ENCODE measurements at regions of chr6 and their contacts with region 1.

Region 1: DNA sequence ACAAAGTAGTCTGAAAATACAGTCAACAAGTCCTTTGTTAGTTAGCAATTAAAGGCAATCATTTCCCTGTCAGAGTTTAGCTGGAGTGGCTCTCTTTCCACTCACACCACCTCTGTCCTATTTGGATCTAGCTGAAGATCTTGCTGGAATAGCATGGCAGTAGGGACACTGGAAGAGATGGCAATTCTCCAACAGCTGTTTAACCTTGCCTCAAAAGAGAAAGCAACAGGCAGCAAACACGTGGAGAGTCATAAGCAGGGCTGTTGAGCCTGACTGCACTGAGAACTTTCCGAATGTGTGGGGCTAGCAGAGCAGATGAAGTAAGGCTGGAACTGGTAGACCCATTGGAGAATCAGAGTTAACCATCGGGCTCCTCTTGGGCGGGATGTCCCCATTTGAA is 38.0 kb upstream of the PRSS35 start:
- DNase-seq: no peak
- ATAC-seq: peak; percentile 77 to 91 (median 84)
- H3K4me3 ChIP-seq: no peak overlapping the region
- H3K27ac ChIP-seq: no peak overlapping the region
- H3K4me1 ChIP-seq: no peaks in the 10 kb centered on the region
- H3K27me3 ChIP-seq: no peaks in the 10 kb centered on the region
- CTCF ChIP-seq: no peak

Region 2: GRCh38 chr6:83429857-83430610 is 44.3 kb before region 1 on chr6:
- intact Hi-C with region 1: loop called in 1 of 2 experiments (anchors 10 kb)
- DNase-seq: peak in 1 of 2 donors; percentile 30
- ATAC-seq: peak; percentile 55 to 69 (median 66)
- H3K4me3 ChIP-seq: peak overlapping the region; percentile 89
- H3K27ac ChIP-seq: peak overlapping the region; percentile 82
- H3K4me1 ChIP-seq: peaks cover 10% of the 10 kb centered on the region
- H3K27me3 ChIP-seq: no peaks in the 10 kb centered on the region
- CTCF ChIP-seq: no peak

Region 3: DNA sequence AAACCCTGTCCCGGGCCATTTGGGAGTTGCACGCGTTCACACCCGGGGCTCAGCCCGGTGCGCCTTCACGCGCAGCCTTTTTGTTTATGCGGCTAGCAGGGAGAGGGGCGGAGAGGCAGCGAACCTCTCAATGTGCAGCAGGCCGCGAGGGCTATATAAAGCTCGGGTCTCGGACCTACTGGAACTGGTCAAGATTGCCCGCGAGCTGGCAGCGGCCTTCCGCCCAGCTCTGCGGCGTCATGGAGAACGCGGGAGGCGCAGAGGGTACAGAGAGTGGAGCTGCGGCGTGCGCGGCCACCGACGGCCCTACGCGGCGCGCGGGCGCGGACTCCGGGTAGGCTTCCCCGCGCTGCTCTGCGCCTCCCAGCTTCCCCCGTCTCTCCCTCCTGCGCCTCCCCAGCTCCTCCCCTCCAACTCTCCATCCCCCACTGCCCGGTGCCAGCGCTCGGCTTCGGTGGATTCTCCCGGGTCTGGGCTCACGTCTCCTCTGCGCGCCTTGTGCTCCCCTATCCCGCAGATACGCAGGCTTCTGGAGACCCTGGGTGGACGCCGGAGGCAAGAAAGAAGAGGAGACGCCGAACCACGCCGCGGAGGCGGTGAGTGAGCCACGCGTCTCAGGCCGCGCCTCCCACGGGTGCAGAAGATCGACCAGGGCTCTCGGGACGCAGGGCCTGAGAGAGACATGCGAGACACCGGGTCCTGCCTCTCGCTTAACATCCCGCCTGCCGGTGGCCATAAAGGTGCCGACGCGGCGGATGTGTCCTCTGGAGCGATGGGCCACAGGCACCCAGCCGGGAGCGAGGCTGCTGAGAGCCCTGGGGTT is 379.1 kb after region 1 on chr6 and contains the start of gene RIPPLY2:
- intact Hi-C with region 1: no loop called
- DNase-seq: peak in 1 of 2 donors; percentile 48
- ATAC-seq: peak in 3 of 4 donors; percentile 65 to 68 (median 67)
- H3K4me3 ChIP-seq: peak within 1 kb of the TSS; percentile 60
- H3K27ac ChIP-seq: no peak within 1 kb of the TSS
- H3K4me1 ChIP-seq: peaks cover 7% of the 10 kb centered on the region
- H3K27me3 ChIP-seq: peaks cover 0 to 51% (median 4%) of the 10 kb centered on the region in 3 donors
- CTCF ChIP-seq: no peak
- total RNA-seq, gene RIPPLY2: not detected